ENCODE measurements at regions of chr6 and their contacts with region 1.

Region 1: GRCh38 chr6:145963216-145964068 is 716 bp downstream of the SHPRH start:
- DNase-seq: peak; percentile 54
- H3K4me3 ChIP-seq: peak overlapping the region; percentile 78
- H3K27ac ChIP-seq: peak overlapping the region; percentile 75
- H3K4me1 ChIP-seq: peaks cover 6% of the 10 kb centered on the region
- H3K27me3 ChIP-seq: no peaks in the 10 kb centered on the region
- CTCF ChIP-seq: no peak

Region 2: DNA sequence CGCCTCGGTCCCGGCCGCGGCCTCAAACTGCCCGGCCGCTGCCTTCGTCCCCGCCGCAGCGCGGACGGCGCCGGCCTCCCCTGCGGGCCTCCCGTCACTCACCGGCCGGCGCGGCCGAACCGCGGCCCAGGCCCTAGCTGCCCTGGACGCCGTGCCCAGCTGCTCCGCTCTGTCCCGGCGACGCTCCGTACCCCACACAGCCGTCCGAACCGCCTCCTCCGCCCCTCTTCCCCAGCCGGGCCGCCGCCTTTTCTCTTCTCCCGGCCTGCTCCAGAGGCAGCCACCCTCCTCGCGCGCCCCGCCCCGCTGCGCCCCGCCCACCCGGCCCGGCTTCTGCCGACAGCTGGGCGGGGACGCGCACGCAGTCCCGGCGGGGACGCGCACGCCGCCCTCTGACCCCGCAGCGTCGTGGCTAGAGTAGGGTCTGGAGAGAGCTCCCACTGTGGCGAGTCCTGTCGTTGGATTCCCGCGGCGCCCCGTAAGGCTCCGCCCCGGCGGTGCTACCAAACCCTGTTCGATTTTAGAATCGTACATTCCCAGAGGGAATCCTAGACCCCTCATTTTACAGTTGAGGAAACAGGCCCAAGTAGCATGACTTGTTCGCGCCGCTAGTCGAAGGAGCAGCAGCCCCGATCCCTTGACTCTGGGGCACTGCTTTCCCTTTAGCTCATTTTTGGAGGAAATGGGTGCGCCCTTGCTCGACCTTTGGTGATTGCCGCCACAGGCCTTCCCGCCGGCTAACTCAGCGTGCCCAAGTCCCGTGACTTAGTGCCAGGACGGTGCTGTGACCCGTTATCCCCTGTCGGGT is 148.7 kb before region 1 on chr6 and contains the start of gene FBXO30:
- intact Hi-C with region 1: loop called (anchors 5 kb)
- DNase-seq: peak; percentile 89
- H3K4me3 ChIP-seq: peak within 1 kb of the TSS; percentile 66
- H3K27ac ChIP-seq: peak within 1 kb of the TSS; percentile 78
- H3K4me1 ChIP-seq: no peaks in the 10 kb centered on the region
- H3K27me3 ChIP-seq: no peaks in the 10 kb centered on the region
- CTCF ChIP-seq: no peak
- total RNA-seq, gene FBXO30: 5.4 to 9.0 TPM

Measured in colonic mucosa (tissue), 4 donors.